ENCODE measurements at regions of chr1 and their contacts with region 1.

Region 1: GRCh38 chr1:169106095-169106920 is at the start of gene ATP1B1:
- DNase-seq: peak; percentile 72 to 84 (median 78)
- H3K4me3 ChIP-seq: peak within 1 kb of the TSS; percentile 57 to 70
- H3K4me3 Mint-ChIP-seq: peak within 1 kb of the TSS; percentile 78 to 97 (median 90)
- H3K27ac ChIP-seq: peak within 1 kb of the TSS; percentile 23
- H3K27ac Mint-ChIP-seq: peak within 1 kb of the TSS; percentile 58 to 88 (median 78)
- H3K4me1 ChIP-seq: peaks cover 27% of the 10 kb centered on the region
- H3K4me1 Mint-ChIP-seq: peaks cover 20 to 49% (median 34%) of the 10 kb centered on the region in 4 donors
- H3K27me3 ChIP-seq: no peaks in the 10 kb centered on the region
- H3K27me3 Mint-ChIP-seq: peaks cover 2 to 4% of the 10 kb centered on the region in 2 donors
- total RNA-seq, gene ATP1B1: 3.3 to 3.5 TPM

Region 2: GRCh38 chr1:169485544-169486278 is 379.4 kb after region 1 on chr1 and contains the start of gene SLC19A2:
- CTCF ChIA-PET with region 1: no interaction called
- POLR2A ChIA-PET with region 1: no interaction called
- intact Hi-C with region 1: loop called (anchors 10 kb)
- DNase-seq: peak; percentile 89 to 96 (median 91)
- H3K4me3 ChIP-seq: peak within 1 kb of the TSS; percentile 60 to 63
- H3K4me3 Mint-ChIP-seq: peak within 1 kb of the TSS; percentile 93 to 97 (median 95)
- H3K27ac ChIP-seq: peak within 1 kb of the TSS; percentile 73
- H3K27ac Mint-ChIP-seq: peak within 1 kb of the TSS; percentile 88 to 96 (median 94)
- H3K4me1 ChIP-seq: peaks cover 20% of the 10 kb centered on the region
- H3K4me1 Mint-ChIP-seq: peaks cover 28 to 37% (median 30%) of the 10 kb centered on the region in 4 donors
- H3K27me3 ChIP-seq: no peaks in the 10 kb centered on the region
- H3K27me3 Mint-ChIP-seq: no peaks in the 10 kb centered on the region
- total RNA-seq, gene SLC19A2: 4.1 to 4.5 TPM

Measured in CD4-positive, alpha-beta memory T cell (primary cell).